PC-9 (cell line): ENCODE measurements at regions of chr7 and their contacts with region 1.

Region 1: GRCh38 chr7:3510101-3511020 is 209.3 kb downstream of the SDK1 start:
- DNase-seq: no peak
- H3K4me3 ChIP-seq: no peak overlapping the region
- H3K27ac ChIP-seq: no peak overlapping the region
- H3K4me1 ChIP-seq: no peaks in the 10 kb centered on the region
- H3K27me3 ChIP-seq: peaks cover 9% of the 10 kb centered on the region; the same call in 1 of the 2 replicates
- CTCF ChIP-seq: no peak

Region 2: DNA sequence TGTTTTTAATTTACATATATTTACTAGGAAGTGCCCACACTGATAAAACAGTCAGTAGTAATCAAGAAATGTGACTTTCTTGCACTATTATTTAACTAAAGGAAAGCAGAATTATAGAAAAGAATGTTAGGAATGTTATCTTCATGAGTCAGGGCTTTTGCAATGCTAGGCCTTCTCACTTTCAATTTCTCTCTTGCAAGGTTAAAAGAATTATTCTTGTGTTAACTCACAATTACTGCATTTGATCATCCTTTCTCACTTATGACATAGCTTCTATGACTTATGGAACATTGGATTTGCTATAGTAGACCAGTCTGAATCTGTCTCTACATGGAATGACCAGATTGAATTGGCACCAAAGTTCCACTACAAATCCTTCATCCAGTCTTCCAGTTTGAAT is 16.9 kb before region 1 on chr7:
- CTCF ChIA-PET with region 1: no interaction called
- POLR2A ChIA-PET with region 1: no interaction called
- intact Hi-C with region 1: loop called (anchors 1 kb)
- DNase-seq: peak in 1 of 2 experiments; percentile 63
- H3K4me3 ChIP-seq: no peak overlapping the region
- H3K27ac ChIP-seq: no peak overlapping the region
- H3K4me1 ChIP-seq: peaks cover 9% of the 10 kb centered on the region; the same call in 1 of the 2 replicates
- H3K27me3 ChIP-seq: peaks cover 57% of the 10 kb centered on the region
- CTCF ChIP-seq: no peak